ENCODE measurements at regions of chr2 and their contacts with region 1.

Region 1: DNA sequence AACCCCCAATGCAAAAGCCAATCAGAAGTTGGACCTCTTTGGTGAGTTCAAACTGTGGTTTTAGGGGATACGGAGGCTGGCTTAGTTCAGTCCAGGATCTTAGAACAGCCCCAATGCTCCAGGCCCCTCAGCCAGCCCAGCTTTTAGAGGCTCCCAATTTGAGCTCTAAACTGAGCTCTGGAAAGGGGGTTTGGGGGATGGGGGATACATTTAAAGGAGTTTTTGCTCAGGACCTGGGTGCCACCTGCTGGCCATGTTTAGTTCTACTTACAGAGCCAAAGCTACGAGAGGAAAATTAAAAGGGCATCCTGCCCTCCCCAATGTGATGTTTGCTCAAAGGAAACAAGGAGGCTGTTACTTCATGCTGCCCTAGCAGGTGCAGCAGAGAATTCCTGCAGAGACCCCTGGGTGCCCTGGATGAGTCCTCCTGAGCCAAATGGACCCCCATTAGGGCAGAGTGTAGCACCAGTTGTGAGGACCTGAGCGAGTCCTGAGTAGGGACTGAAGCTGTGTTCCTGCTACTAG is 15.9 kb upstream of the TMEM214 start:
- DNase-seq: peak; percentile 62 to 79 (median 74)
- H3K4me3 ChIP-seq: no peak overlapping the region
- H3K27ac ChIP-seq: peak overlapping the region in 1 of 2 donors; percentile 27
- H3K4me1 ChIP-seq: peaks cover 20% of the 10 kb centered on the region
- H3K27me3 ChIP-seq: no peaks in the 10 kb centered on the region
- CTCF ChIP-seq: peak; percentile 51 to 80 (median 77)
- EP300 ChIP-seq: no peak
- POLR2A ChIP-seq: peak; percentile 16

Region 2: DNA sequence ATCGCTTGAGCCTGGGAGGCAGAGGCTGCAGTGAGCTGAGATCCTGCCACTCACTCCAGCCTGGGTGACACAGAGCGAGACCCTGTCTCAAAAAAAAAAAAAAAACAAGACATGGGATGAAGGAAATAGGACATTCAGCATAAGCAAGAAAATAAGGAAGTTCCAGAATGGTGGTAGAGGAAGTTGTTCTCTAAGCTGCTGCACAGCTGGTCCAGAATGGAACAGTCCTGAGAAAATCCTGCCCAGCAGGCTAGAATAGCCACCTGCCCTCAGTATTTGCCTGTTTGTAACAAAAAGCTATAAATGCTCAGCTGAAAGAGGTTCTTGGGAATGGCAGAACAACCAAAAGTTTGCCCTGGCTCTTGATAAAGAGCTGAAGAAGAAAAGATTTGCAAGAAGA is 57.5 kb before region 1 on chr2:
- intact Hi-C with region 1: loop called (anchors 2 to 5 kb)
- DNase-seq: no peak
- H3K4me3 ChIP-seq: no peak overlapping the region
- H3K27ac ChIP-seq: no peak overlapping the region
- H3K4me1 ChIP-seq: no peaks in the 10 kb centered on the region
- H3K27me3 ChIP-seq: no peaks in the 10 kb centered on the region
- CTCF ChIP-seq: no peak
- EP300 ChIP-seq: no peak
- POLR2A ChIP-seq: no peak

Region 3: DNA sequence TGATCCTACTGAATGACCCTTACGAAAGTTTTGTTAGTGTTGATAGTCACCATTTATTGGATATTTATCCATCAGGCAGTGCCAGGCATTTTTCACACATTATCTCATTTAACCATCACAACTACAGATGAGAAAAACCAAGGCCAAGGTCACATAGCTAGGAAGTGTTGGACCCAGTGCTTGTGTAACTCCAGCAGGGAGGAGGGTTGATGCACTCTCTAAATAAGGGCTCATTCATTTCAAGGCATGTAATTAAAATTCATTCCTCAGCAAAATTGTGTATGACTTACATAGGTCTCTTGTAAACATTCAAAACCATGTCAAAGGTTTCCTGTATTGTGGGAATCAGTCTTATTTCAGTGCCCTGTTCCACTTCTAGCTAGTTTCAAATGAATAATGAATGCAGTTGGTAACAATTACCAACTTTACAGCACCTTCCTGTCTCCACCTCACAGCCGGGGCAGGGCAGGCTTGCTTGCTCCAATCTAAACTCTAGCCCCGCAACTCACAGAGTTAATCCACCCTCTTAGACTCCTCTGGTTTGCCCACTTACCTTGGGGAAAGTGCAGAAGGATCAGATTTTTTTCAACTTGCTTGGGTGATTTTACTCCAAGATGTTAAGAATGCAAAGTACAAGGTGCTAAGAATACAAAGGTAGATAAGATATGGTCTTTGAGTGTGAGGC is 52.3 kb before region 1 on chr2:
- intact Hi-C with region 1: loop called (anchors 2 to 5 kb)
- DNase-seq: no peak
- H3K4me3 ChIP-seq: no peak overlapping the region
- H3K27ac ChIP-seq: no peak overlapping the region
- H3K4me1 ChIP-seq: no peaks in the 10 kb centered on the region
- H3K27me3 ChIP-seq: no peaks in the 10 kb centered on the region
- CTCF ChIP-seq: no peak
- EP300 ChIP-seq: no peak
- POLR2A ChIP-seq: no peak

Region 4: GRCh38 chr2:26978061-26978596 is 38.7 kb before region 1 on chr2:
- intact Hi-C with region 1: loop called in 1 of 4 experiments (anchors 5 kb)
- DNase-seq: no peak
- H3K4me3 ChIP-seq: no peak overlapping the region
- H3K27ac ChIP-seq: no peak overlapping the region
- H3K4me1 ChIP-seq: peaks cover 11% of the 10 kb centered on the region
- H3K27me3 ChIP-seq: no peaks in the 10 kb centered on the region
- CTCF ChIP-seq: no peak
- EP300 ChIP-seq: no peak
- POLR2A ChIP-seq: no peak

Region 5: GRCh38 chr2:27211241-27211828 is 194.5 kb after region 1 on chr2:
- intact Hi-C with region 1: no loop called
- DNase-seq: peak in 1 of 5 donors; percentile 33
- H3K4me3 ChIP-seq: peak overlapping the region; percentile 50
- H3K27ac ChIP-seq: peak overlapping the region; percentile 89 to 94
- H3K4me1 ChIP-seq: peaks cover 6% of the 10 kb centered on the region
- H3K27me3 ChIP-seq: no peaks in the 10 kb centered on the region
- CTCF ChIP-seq: no peak
- EP300 ChIP-seq: no peak
- POLR2A ChIP-seq: no peak

Region 6: DNA sequence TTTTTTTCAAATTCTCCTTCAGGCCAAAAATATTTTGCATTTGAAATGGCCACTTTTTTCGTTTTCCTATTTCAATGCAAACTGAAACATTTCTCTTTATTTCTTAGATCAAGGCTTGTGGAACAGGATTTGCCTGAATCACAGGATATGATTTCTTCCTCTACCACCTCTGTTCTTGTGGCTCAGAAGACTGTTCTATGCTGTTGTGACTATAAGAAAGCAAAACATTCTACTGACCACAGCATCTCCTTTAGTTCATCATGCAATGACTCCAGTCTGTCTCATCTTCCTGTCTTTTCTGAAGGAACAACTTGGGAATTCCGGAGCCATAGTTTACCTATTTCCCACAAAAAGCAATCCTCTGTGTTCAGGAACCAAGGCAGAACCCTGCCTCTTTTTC is 549.8 kb after region 1 on chr2:
- intact Hi-C with region 1: no loop called
- DNase-seq: no peak
- H3K4me3 ChIP-seq: no peak overlapping the region
- H3K27ac ChIP-seq: no peak overlapping the region
- H3K4me1 ChIP-seq: no peaks in the 10 kb centered on the region
- H3K27me3 ChIP-seq: no peaks in the 10 kb centered on the region
- CTCF ChIP-seq: no peak
- EP300 ChIP-seq: no peak
- POLR2A ChIP-seq: no peak

Measured in ovary (tissue), 10 donors.